Right lobe of liver (tissue), 6 donors: ENCODE measurements at regions of chr1 and their contacts with region 1.

Region 1: DNA sequence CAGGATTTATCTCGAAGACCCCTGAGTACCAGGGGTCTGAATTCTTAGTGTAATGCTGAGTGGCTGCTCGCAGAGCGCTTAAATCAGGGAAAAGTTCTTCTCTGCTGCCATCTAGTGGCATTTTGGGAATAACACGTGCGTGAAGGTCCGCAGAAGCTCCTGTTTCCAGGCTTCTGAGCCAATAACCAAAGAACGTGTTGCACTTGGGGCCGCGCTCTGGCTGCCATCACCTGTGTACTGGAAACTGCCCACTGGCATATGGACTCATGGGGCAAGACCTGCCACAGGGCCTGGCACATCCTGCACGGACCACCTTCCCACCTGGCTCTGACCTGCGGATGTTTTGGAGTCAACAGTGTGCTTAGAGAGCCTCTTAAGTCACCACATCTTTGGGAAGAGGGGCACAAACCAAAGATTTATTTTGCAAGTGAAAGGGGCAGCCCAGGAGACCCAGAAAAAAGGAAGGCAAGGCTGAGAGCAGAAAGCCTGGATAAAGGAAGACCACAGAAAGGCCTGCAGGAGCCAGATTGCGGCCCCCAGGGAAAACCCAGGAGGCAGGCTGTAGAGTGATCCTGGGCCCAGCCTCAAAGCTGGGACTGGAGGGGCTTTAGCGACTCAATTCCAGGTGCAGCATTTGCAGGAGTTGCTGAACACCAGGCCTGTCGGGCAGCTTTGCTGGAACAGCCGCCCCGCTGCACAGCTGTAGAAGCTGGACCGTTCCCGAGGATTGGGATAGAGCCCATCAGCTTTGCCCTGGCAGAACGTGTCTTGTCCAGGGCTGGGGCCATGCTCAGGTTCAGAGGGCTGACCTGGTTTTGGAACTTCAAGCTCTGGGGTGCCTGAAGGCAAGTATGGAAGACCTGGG is 13.0 kb downstream of the CHIT1 start:
- DNase-seq: peak in 1 of 3 donors; percentile 65
- ATAC-seq: peak; percentile 74 to 89 (median 86)
- H3K4me3 ChIP-seq: no peak overlapping the region
- H3K27ac ChIP-seq: no peak overlapping the region
- H3K4me1 ChIP-seq: peaks cover 0 to under 1% (median 0%) of the 10 kb centered on the region in 4 donors
- H3K27me3 ChIP-seq: no peaks in the 10 kb centered on the region
- CTCF ChIP-seq: peak; percentile 77 to 83 (median 82)
- POLR2A ChIP-seq: no peak

Region 2: DNA sequence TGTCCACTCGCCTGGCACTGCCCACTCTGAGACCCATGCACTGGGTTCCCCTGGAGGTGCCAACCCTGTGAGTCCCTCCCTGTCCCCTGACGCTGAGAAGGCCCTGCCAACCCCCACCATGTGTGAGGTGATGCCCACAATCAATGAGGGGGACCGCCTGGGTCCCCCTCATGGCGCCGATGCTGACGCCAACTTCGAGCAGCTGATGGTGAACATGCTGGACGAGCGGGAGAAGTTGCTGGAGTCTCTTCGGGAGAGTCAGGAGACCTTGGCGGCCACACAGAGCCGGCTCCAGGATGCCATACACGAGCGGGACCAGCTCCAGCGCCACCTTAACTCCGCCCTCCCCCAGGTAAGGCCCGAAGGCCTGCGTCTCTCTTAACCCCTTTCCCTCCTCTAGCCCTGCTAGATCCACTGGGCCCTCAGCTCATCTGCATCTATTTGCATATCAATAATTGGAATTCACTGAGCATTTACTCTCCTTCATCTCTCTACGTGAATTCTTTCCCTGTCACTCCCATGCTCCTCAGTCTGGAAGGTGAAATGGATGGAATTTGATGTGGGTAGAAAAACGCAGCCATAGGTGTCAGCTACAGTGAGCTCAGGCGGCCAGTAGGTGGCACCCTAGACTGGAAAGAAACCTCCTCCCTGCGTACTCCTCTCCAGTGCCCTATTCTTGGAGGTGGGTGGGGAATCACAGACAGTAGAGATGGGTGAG is 177.5 kb before region 1 on chr1:
- intact Hi-C with region 1: loop called in 1 of 2 experiments (anchors 5 kb)
- DNase-seq: peak; percentile 72 to 78 (median 72)
- ATAC-seq: peak; percentile 89 to 94 (median 91)
- H3K4me3 ChIP-seq: no peak overlapping the region
- H3K27ac ChIP-seq: no peak overlapping the region
- H3K4me1 ChIP-seq: no peaks in the 10 kb centered on the region
- H3K27me3 ChIP-seq: no peaks in the 10 kb centered on the region
- CTCF ChIP-seq: peak; percentile 87 to 91 (median 90)
- POLR2A ChIP-seq: no peak

Region 3: GRCh38 chr1:203117611-203118575 is 98.6 kb before region 1 on chr1:
- intact Hi-C with region 1: loop called (anchors 5 kb)
- DNase-seq: peak in 2 of 3 donors; percentile 68 to 71
- ATAC-seq: peak; percentile 87 to 96 (median 89)
- H3K4me3 ChIP-seq: no peak overlapping the region
- H3K27ac ChIP-seq: no peak overlapping the region
- H3K4me1 ChIP-seq: no peaks in the 10 kb centered on the region
- H3K27me3 ChIP-seq: no peaks in the 10 kb centered on the region
- CTCF ChIP-seq: peak; percentile 62 to 76 (median 64)
- POLR2A ChIP-seq: no peak

Region 4: DNA sequence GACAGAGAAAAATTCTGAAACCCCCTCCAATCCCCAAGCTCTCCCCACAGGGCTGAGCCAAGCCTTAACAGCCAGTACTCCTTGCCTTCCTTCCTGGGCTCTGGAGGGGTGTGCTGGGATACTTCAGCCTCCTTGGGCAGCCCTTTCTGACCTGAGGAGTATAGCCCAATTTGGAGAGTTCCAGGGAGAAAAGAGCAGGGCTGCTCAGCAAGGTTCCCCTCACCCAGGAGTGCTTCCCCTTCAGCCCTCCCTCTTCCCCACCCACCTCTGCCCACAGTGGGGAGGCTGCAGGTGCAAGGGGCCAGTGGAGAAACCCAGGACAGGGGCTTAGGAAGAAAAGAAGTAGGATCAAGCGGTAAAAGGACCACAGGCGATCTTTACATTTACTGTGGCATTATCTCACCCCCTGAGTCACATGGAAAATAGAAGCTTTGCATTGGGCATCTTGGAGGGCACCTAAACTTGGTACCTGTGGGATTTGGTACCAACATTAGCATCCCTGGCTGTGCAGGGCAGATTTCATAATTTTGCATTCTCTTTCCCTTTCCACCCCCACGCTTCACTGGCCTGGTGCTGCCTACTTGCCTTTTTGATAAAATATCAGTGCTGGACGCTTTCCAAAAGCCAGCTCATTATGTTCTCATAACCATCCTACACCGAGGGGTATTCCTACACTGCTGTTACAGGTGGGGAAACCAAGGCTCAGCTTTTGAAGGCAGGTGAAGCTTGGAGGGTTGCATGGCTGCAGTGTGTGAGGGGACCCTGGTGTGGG is 91.8 kb before region 1 on chr1:
- intact Hi-C with region 1: loop called (anchors 5 kb)
- DNase-seq: no peak
- ATAC-seq: no peak
- H3K4me3 ChIP-seq: no peak overlapping the region
- H3K27ac ChIP-seq: no peak overlapping the region
- H3K4me1 ChIP-seq: peaks cover 0 to 13% (median 2%) of the 10 kb centered on the region in 4 donors
- H3K27me3 ChIP-seq: peaks cover 0 to 5% of the 10 kb centered on the region in 2 donors
- CTCF ChIP-seq: no peak
- POLR2A ChIP-seq: no peak

Region 5: DNA sequence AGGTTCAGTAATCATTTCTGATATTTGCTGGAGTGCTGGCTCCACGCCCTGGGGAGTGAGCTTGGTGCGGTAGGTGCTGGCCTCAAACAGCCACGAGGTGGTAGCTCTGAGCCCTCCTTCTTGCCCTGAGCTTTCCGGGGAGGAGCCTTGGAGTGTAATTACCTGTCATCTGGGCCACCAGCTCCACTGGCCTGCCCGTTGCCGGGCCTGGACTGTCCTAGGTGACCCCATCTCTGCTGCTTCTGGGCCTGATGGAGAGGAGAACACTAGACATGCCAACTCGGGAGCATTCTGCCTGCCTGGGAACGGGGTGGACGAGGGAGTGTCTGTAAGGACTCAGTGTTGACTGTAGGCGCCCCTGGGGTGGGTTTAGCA is 50.0 kb before region 1 on chr1:
- intact Hi-C with region 1: loop called in 1 of 2 experiments (anchors 5 kb)
- DNase-seq: peak in 2 of 3 donors; percentile 63 to 71
- ATAC-seq: peak; percentile 76 to 97 (median 89)
- H3K4me3 ChIP-seq: no peak overlapping the region
- H3K27ac ChIP-seq: no peak overlapping the region
- H3K4me1 ChIP-seq: no peaks in the 10 kb centered on the region
- H3K27me3 ChIP-seq: no peaks in the 10 kb centered on the region
- CTCF ChIP-seq: peak; percentile 38 to 60 (median 52)
- POLR2A ChIP-seq: no peak